Calu3 (cell line): ENCODE measurements at regions of chr2 and their contacts with region 1.

Region 1: DNA sequence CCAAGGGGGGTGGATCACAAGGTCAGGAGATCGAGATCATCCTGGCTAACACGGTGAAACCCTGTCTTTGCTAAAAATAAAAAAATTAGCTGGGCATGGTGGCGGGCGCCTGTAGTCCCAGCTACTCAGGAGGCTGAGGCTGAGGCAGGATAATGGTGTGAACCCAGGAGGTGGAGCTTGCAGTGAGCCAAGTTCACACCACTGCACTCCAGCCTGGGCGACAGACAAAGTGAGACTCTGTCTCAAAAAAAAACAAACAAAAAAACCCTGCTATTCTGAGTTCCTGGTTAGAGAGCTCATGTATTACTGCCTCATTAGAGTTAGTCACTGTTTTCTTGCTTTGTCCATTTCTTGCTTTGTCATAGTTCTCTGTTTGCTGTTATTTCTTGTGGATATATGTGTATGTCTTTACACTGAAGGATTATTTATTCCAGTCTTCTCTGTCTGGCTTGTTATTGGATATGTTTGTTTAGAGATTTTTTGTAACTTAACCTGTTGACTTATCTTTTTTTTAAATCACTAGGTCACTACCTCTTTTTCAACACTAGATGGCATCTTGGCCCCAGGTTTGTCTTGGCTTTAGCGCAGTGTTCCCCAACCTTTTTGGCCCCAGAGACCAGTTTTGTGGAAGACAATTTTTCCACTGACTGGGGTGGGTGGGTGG is 17.0 kb downstream of the TTLL4 start:
- DNase-seq: no peak
- H3K4me3 Mint-ChIP-seq: no peak overlapping the region
- H3K27ac Mint-ChIP-seq: no peak overlapping the region
- H3K4me1 Mint-ChIP-seq: peaks cover 25% of the 10 kb centered on the region
- H3K27me3 Mint-ChIP-seq: no peaks in the 10 kb centered on the region
- CTCF ChIP-seq: no peak

Region 2: DNA sequence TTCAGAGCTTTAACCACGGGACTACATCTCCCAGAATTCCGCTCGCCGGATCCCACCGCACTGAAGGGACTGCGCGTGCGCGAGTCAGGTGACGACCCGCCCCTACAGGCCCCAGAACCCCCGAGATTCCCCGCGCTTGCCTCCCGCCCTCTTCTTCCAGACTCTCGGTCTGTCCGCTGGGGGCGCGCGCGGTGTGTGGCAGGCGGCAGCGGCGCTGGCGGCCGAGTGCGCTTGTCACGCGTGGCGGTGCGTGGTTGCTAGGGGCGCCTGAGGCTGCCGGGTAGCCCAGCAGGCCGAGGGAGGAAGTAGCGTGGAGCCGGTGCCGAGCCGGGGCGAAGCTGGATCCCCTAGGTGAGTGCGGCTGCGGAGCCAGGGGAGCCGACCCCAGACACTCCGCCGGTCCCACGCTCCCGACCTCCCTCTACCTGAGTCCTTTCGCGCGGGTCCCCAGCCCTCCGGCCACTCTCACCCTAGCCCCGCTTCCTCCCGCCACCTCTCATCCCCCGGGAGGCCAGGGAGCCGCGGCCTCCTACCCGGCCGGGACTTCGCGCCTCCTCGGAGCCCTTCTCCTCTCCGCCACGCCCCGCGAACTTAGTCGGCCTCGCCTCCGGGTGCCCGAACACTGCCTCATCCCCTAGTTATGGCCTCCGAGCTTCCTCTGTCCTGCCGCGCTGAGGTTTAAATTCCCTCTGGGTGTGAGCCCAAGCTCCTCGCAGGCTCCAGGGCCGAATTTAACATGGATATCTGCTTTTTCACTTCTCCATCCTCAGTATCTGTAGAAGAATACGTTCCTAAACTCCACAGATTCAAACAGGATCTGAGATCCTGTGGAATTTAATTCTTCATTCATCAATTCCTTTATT is 16.7 kb before region 1 on chr2 and contains the start of gene TTLL4:
- CTCF ChIA-PET with region 1: interaction called, 11 read pairs
- intact Hi-C with region 1: no loop called
- DNase-seq: peak; percentile 98
- H3K4me3 Mint-ChIP-seq: peak within 1 kb of the TSS; percentile 79
- H3K27ac Mint-ChIP-seq: peak within 1 kb of the TSS; percentile 90
- H3K4me1 Mint-ChIP-seq: peaks cover 20% of the 10 kb centered on the region
- H3K27me3 Mint-ChIP-seq: no peaks in the 10 kb centered on the region
- CTCF ChIP-seq: peak; percentile 86
- total RNA-seq, gene TTLL4: 67.3 and 75.5 TPM in 2 replicates